ENCODE measurements at regions of chr20 and their contacts with region 1.

Region 1: DNA sequence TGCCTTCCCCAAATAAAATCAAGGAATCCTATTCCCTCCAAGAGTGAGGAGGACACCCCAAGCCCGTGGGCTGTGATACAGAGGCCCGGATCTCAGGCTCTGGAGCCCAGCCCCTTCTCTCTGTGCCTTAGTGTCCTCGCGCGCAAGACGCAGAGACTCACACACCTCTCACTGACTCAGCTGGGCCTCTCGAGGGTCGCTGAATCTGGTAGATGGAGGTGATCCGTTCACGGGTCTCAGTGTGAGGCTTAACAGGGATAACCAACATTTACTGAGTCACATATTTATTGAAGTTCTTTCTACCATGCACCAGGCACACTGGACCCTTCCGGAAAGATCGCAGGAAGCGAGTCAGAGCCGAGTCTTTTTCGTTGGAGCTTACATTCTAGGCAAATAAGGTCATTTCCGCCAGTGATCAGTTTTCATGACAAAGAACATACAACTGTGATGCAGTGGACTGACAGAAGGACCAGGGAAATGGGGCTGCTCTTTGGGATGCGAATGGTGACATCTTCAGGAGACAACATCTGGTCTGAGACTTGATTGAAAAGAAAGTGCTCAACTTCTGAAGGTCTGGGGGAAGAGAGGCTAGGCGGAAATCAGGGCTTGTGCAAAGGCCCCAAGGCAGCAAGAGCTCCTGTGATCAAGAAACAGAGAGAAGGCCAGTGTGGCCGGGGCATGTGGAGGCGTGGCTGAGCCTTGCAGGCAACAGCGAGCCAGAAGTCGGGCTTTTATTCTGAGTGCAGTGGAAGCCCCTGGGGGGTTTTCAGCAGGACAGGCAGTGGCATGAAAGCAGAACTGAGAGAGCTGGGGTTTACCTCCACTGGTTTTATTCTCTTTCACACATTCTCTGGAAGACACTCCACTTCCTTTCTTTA is 56.8 kb downstream of the APCDD1L start:
- DNase-seq: no peak
- ATAC-seq: no peak
- H3K4me3 ChIP-seq: no peak overlapping the region
- H3K27ac ChIP-seq: no peak overlapping the region
- H3K4me1 ChIP-seq: no peaks in the 10 kb centered on the region
- H3K27me3 ChIP-seq: no peaks in the 10 kb centered on the region
- CTCF ChIP-seq: no peak
- POLR2A ChIP-seq: no peak

Region 2: DNA sequence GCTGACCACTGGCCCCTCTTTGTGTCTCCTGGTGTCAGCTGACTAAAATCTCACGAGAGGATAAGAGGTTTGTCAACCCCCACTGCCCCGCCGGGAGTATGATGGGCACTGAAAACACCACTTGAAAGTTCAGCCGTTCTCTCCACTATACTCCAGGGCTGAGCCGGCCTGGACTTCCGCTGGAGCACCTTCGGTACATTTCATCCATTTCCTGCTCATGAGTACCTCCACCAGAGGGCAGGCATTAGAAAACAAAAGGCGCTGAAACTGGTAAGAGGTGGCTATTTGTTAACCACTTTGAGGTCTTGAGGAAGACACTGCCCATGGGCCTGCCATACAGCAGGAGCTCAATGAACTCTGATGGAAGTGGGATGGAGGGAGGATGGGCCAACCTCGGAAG is 212.1 kb before region 1 on chr20:
- intact Hi-C with region 1: loop called in 1 of 2 experiments (anchors 10 kb)
- DNase-seq: no peak
- ATAC-seq: peak in 1 of 4 donors; percentile 40
- H3K4me3 ChIP-seq: no peak overlapping the region
- H3K27ac ChIP-seq: no peak overlapping the region
- H3K4me1 ChIP-seq: no peaks in the 10 kb centered on the region
- H3K27me3 ChIP-seq: no peaks in the 10 kb centered on the region
- CTCF ChIP-seq: peak; percentile 13 to 27 (median 18)
- POLR2A ChIP-seq: no peak

Region 3: DNA sequence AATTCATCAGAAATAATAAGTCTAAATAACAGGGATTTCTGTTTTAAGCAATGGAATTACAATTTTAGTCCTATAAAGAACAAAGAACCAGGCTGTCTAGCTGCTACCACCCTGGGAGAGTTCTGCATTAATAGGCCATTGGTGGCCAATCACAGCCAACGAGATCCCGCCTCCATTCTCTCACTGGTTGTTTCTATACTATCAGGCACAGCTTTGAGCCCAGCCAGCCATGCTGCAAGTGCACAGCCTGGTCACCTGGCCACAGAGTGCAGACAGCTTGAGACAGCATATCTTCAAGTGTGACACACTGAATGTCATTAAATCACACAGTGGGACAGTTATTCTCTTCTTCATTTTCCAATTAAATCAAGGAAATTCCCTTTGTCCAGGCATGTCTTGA is 165.0 kb before region 1 on chr20:
- intact Hi-C with region 1: no loop called
- DNase-seq: no peak
- ATAC-seq: no peak
- H3K4me3 ChIP-seq: no peak overlapping the region
- H3K27ac ChIP-seq: no peak overlapping the region
- H3K4me1 ChIP-seq: peaks cover 0 to 5% (median 0%) of the 10 kb centered on the region in 4 donors
- H3K27me3 ChIP-seq: no peaks in the 10 kb centered on the region
- CTCF ChIP-seq: no peak
- POLR2A ChIP-seq: no peak